CD14-positive monocyte (primary cell): ENCODE measurements at regions of chr10 and their contacts with region 1.

Region 1: DNA sequence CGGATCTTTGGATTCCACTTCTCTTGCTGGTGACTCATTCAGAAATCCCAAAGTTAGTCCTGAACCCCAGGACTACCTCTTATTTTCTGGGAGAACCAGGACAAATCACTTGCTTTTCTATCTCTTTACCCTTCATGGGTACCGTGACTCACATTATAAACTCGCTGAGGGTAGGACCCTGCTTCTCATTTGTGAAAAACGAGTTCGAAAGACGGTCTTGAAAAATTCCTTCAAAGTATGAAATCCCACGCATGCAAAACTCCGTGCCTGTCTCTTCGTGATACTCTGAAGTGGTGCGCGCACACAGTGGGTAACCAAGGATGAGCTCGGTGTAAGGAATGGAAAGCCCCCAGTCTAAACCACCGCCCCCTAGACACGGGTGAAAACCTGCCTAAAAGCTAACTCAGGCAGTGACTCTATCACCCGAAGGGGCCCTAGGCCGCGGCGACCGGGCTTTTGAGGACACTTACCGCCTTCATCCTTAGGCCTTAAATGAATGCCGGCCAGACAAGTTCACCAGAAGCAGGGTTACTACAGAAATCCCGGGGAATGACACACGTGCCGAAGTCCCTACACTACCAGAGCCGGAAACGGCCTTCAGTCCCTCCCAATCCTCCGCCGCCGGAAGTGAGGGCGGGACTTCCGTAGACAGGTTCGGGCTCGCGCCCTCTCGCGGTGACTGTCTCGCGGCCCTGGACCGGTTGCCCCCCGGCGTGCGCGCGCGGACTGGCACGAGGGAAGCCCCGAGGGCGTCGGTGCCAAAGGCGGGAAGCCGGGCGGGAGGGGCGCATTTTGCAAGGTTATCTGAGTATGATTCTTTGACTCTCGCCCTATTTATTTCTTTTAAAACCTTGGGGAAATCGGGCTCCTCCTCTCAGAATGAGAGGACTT is at the start of gene NOC3L:
- DNase-seq: peak; percentile 88 to 94 (median 91)
- H3K4me3 ChIP-seq: peak within 1 kb of the TSS; percentile 66 to 93 (median 83)
- H3K4me3 Mint-ChIP-seq: peak within 1 kb of the TSS; percentile 92 to 95
- H3K27ac ChIP-seq: peak within 1 kb of the TSS; percentile 36 to 82
- H3K27ac Mint-ChIP-seq: peak within 1 kb of the TSS; percentile 78 to 94 (median 86)
- H3K4me1 ChIP-seq: peaks cover 12 to 21% of the 10 kb centered on the region in 2 donors
- H3K4me1 Mint-ChIP-seq: peaks cover 18% of the 10 kb centered on the region
- H3K27me3 ChIP-seq: peaks cover 0 to 6% of the 10 kb centered on the region in 2 donors
- H3K27me3 Mint-ChIP-seq: peaks cover 15 to 22% (median 16%) of the 10 kb centered on the region in 3 donors
- CTCF ChIP-seq: peak; percentile 82
- polyA plus RNA-seq, gene NOC3L: 2.4 to 3.0 (median 2.7) TPM

Region 2: DNA sequence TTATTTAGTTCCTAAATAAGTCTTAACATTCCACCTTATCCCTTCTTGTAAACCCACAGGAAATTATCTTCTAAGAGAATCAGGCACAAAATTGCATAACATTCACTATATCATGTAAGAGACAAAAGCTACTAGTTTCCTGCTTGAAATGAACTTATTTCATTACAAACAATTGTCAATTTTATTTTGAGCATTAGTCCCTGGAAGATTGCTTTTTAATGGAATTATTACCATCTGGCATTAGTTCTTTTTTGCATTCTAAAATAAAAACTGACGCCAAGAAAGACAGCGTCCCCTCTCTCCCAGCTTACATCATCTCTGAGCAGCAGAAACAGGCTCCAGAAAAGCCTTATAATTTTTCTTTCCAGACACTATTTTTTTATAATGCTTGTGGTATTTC is 121.7 kb before region 1 on chr10:
- intact Hi-C with region 1: no loop called
- DNase-seq: no peak
- H3K4me3 ChIP-seq: no peak overlapping the region
- H3K4me3 Mint-ChIP-seq: no peak overlapping the region
- H3K27ac ChIP-seq: no peak overlapping the region
- H3K27ac Mint-ChIP-seq: no peak overlapping the region
- H3K4me1 ChIP-seq: no peaks in the 10 kb centered on the region
- H3K4me1 Mint-ChIP-seq: peaks cover 2% of the 10 kb centered on the region
- H3K27me3 ChIP-seq: no peaks in the 10 kb centered on the region
- H3K27me3 Mint-ChIP-seq: peaks cover 0 to 6% (median 3%) of the 10 kb centered on the region in 3 donors
- CTCF ChIP-seq: no peak

Region 3: GRCh38 chr10:94402015-94402842 is 39.6 kb after region 1 on chr10 and contains the start of gene TBC1D12:
- intact Hi-C with region 1: loop called in 1 of 2 experiments (anchors 5 kb)
- DNase-seq: peak; percentile 83 to 92 (median 91)
- H3K4me3 ChIP-seq: peak within 1 kb of the TSS; percentile 75 to 88 (median 79)
- H3K4me3 Mint-ChIP-seq: peak within 1 kb of the TSS; percentile 84 to 91
- H3K27ac ChIP-seq: peak within 1 kb of the TSS; percentile 87 to 97
- H3K27ac Mint-ChIP-seq: peak within 1 kb of the TSS; percentile 37 to 96 (median 95)
- H3K4me1 ChIP-seq: peaks cover 15 to 23% of the 10 kb centered on the region in 2 donors
- H3K4me1 Mint-ChIP-seq: peaks cover 19% of the 10 kb centered on the region
- H3K27me3 ChIP-seq: peaks cover 0 to 16% of the 10 kb centered on the region in 2 donors
- H3K27me3 Mint-ChIP-seq: peaks cover 44 to 50% (median 49%) of the 10 kb centered on the region in 3 donors
- CTCF ChIP-seq: no peak
- polyA plus RNA-seq, gene TBC1D12: 3.1 to 10.5 (median 3.4) TPM

Region 4: DNA sequence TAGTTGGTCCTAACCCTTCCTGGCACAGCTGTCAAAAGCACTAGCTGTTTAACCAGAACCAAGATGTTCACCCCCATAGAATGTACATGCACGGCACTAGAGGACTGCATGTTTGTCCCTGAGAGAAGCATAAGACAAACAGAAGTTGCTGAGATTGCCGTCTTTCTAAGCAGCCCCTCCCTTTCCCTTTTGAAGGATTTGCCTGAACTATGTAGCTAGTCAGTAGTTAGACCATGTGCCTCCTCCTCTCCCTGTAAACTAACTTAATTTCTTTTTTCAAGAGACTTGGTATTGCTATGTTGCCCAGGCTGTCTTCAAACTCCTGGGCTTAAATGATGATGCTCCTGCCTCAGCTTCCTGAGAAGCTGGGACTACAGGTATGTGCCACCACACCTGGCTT is 80.4 kb after region 1 on chr10:
- intact Hi-C with region 1: loop called in 1 of 2 experiments (anchors 5 kb)
- DNase-seq: no peak
- H3K4me3 ChIP-seq: no peak overlapping the region
- H3K4me3 Mint-ChIP-seq: no peak overlapping the region
- H3K27ac ChIP-seq: no peak overlapping the region
- H3K27ac Mint-ChIP-seq: no peak overlapping the region
- H3K4me1 ChIP-seq: no peaks in the 10 kb centered on the region
- H3K4me1 Mint-ChIP-seq: peaks cover 5% of the 10 kb centered on the region
- H3K27me3 ChIP-seq: no peaks in the 10 kb centered on the region
- H3K27me3 Mint-ChIP-seq: peaks cover 0 to 2% (median 1%) of the 10 kb centered on the region in 3 donors
- CTCF ChIP-seq: no peak